Heart left ventricle (tissue), 16 donors: ENCODE measurements at regions of chr7 and their contacts with region 1.

Region 1: DNA sequence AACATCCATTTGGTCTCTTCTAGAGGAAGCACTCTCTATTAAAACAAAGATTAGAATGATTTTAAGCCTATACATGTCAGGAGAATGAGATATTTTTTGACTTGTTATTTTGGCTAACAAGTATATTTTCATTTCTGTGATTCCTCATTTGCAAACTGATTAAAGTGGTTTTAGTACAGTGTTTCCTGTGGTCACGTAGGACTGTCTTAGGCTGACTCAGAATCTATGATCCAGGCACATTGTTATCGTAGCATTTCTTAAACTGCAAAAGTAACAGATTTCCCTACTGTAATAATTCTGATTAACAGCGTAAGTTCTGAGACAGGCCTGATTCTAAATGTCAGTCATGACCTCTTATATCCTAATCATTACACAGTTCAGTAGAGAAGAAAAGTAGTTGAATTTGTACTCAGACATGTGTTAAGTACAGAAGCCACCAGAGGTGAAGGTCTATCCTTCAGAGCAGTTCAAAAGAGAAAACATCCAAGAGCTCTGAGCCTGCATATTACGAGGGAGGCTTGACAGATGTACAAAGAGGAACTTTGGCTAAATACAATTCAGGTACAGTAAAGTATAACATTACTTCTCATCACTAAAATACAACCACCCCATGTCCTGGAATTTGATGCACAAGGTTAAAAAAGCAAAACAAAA is 124.1 kb upstream of the TEX47 start:
- DNase-seq: no peak
- ATAC-seq: no peak
- H3K4me3 ChIP-seq: no peak overlapping the region
- H3K27ac ChIP-seq: no peak overlapping the region
- H3K4me1 ChIP-seq: no peaks in the 10 kb centered on the region
- H3K27me3 ChIP-seq: no peaks in the 10 kb centered on the region
- CTCF ChIP-seq: no peak
- POLR2A ChIP-seq: no peak

Region 2: DNA sequence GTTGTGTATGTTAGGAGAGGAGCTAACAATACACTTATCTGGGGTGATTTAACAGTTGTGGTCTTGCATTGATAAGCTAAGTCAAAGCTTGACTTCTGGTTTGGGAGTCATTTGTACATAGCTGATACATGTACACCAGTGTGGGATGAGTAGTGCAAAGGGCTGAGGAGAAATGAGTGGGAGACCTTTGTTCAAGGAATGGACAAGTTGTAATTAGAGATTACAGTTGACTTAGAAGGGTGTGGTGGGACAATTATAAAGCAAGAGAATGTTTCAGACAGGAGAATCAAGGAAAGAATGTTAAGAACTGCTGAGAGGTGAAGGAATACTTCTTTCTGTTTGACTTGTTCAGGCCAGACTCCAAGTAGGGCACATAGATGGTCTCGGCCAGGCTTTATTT is 403.2 kb before region 1 on chr7:
- intact Hi-C with region 1: no loop called
- DNase-seq: no peak
- ATAC-seq: no peak
- H3K4me3 ChIP-seq: no peak overlapping the region
- H3K27ac ChIP-seq: no peak overlapping the region
- H3K4me1 ChIP-seq: no peaks in the 10 kb centered on the region
- H3K27me3 ChIP-seq: no peaks in the 10 kb centered on the region
- CTCF ChIP-seq: no peak
- POLR2A ChIP-seq: no peak

Region 3: DNA sequence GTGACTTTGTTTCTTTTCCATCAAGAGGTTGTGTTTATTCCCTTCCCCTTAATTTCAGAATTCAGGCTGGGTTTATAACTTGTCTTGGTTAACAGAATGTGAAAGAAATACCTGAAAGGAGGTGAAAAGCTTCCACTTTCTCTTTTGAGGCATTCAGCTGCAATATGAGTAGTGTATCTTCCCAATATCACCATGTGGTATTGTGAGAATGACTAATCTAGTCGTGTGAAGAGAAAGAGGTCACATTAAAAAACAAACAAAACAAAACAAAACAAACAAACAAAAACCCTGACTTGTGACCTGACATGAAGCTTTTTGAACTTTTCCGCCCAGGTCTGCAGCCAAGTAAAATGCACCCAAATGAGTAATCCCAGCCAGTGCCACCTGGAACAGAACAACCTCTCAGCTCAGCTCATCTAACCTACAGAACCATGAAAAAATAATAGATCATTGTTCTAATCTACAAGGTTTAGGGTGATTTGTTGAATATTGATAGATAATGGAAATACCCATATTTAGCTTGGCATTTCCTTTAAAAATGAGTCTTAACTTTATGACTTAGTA is 53.2 kb before region 1 on chr7:
- intact Hi-C with region 1: loop called in 1 of 10 experiments (anchors 5 kb)
- DNase-seq: no peak
- ATAC-seq: no peak
- H3K4me3 ChIP-seq: no peak overlapping the region
- H3K27ac ChIP-seq: no peak overlapping the region
- H3K4me1 ChIP-seq: no peaks in the 10 kb centered on the region
- H3K27me3 ChIP-seq: no peaks in the 10 kb centered on the region
- CTCF ChIP-seq: no peak
- POLR2A ChIP-seq: no peak

Region 4: DNA sequence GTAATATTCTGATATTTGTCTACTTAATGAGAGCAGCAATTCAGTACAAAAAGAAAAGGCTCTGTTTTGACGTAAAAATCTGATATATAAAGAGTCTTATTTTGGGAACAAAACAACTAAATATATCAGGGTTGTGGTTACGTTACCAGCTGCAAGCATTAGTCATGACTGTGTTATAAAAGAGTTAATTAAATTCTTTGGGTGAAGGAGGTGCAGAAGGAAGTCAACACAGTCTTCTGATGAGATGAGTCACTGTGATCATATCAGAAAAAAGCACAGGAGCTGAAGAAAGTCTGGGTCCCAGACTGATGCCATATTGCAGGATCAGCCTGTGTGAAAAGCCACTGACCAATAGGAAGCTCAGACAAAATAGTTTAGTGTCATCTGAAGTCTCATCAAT is 110.3 kb after region 1 on chr7:
- intact Hi-C with region 1: no loop called
- DNase-seq: no peak
- ATAC-seq: no peak
- H3K4me3 ChIP-seq: no peak overlapping the region
- H3K27ac ChIP-seq: no peak overlapping the region
- H3K4me1 ChIP-seq: no peaks in the 10 kb centered on the region
- H3K27me3 ChIP-seq: no peaks in the 10 kb centered on the region
- CTCF ChIP-seq: no peak
- POLR2A ChIP-seq: no peak